Posterior vena cava (tissue), 2 donors: ENCODE measurements at regions of chr2 and their contacts with region 1.

Region 1: GRCh38 chr2:163934131-163934530 is 198.3 kb upstream of the FIGN start:
- DNase-seq: no peak

Region 2: GRCh38 chr2:163834221-163834620 is 99.9 kb before region 1 on chr2:
- intact Hi-C with region 1: no loop called
- DNase-seq: no peak

Region 3: DNA sequence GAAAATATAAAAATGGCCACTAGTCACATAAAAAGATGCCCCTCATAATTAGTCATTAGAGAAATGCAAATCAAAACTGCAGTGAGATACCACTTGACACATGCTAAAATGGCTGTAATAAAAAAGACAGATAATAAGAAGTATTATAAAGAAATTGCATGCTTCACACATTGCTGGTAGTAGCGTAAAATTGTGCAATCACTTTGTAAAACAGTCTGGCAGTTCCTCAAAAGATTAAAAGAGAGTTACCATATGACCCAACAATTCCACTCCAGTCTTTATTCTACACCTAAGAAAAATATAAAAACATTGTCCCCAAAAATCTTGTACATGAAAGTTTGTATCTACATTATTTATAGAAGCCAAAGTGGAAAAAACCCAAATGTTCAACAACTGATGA is 27.7 kb before region 1 on chr2:
- intact Hi-C with region 1: loop called in 1 of 2 experiments (anchors 2 kb)
- DNase-seq: no peak